ENCODE measurements at regions of chr11 and their contacts with region 1.

Region 1: DNA sequence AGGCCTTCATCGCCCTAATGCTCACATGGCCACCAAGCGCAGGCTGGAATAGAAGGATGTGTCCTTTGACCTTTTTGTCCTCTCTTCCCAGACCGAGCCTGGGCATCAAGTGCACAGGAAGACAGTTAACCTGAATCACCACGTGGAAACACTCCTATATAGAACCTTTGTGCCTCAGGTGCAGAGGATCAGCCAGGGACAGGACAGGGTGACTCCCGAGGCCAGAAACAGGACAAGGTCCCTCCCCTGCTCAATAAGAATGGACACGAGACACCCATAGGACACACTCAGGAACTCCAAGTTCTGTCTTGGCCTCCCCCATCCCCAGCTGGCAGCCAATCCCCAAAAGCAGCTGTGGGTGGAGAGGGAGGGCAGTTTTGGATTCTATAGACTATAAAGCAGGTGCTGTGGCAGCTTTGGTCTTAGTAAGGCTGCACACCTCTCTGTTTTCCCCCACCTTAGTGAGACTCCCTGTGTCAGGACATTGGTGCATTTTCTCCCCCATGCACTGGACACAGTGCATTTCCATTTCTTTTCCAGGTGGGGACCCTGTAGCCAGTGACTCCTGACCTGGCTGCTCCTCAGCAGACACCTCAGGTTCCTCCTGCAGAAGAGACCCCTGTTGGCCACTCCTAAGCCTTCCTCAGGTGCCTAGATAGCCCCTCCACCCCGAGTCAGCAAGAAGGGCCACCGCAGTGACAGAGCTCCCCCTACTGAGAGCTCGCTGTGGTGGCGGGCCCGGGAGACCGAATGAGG is 43.6 kb upstream of the POU2AF1 start:
- DNase-seq: peak; percentile 92
- H3K4me3 ChIP-seq: no peak overlapping the region
- H3K27ac ChIP-seq: peak overlapping the region; percentile 67
- H3K4me1 ChIP-seq: peaks cover 62% of the 10 kb centered on the region
- CTCF ChIP-seq: peak; percentile 99

Region 2: GRCh38 chr11:111177037-111177871 is 245.4 kb before region 1 on chr11:
- CTCF ChIA-PET with region 1: no interaction called
- POLR2A ChIA-PET with region 1: interaction called, 6 read pairs
- intact Hi-C with region 1: loop called (anchors 5 kb)
- DNase-seq: peak; percentile 91
- H3K4me3 ChIP-seq: peak overlapping the region; percentile 53
- H3K27ac ChIP-seq: peak overlapping the region; percentile 98
- H3K4me1 ChIP-seq: peaks cover 66% of the 10 kb centered on the region
- CTCF ChIP-seq: no peak

Region 3: GRCh38 chr11:111272420-111272819 is 150.3 kb before region 1 on chr11:
- CTCF ChIA-PET with region 1: interaction called, 3 read pairs
- POLR2A ChIA-PET with region 1: interaction called, 11 read pairs
- intact Hi-C with region 1: no loop called
- DNase-seq: peak; percentile 71
- H3K4me3 ChIP-seq: peak overlapping the region; percentile 41
- H3K27ac ChIP-seq: peak overlapping the region; percentile 90
- H3K4me1 ChIP-seq: peaks cover 66% of the 10 kb centered on the region
- CTCF ChIP-seq: no peak

Region 4: DNA sequence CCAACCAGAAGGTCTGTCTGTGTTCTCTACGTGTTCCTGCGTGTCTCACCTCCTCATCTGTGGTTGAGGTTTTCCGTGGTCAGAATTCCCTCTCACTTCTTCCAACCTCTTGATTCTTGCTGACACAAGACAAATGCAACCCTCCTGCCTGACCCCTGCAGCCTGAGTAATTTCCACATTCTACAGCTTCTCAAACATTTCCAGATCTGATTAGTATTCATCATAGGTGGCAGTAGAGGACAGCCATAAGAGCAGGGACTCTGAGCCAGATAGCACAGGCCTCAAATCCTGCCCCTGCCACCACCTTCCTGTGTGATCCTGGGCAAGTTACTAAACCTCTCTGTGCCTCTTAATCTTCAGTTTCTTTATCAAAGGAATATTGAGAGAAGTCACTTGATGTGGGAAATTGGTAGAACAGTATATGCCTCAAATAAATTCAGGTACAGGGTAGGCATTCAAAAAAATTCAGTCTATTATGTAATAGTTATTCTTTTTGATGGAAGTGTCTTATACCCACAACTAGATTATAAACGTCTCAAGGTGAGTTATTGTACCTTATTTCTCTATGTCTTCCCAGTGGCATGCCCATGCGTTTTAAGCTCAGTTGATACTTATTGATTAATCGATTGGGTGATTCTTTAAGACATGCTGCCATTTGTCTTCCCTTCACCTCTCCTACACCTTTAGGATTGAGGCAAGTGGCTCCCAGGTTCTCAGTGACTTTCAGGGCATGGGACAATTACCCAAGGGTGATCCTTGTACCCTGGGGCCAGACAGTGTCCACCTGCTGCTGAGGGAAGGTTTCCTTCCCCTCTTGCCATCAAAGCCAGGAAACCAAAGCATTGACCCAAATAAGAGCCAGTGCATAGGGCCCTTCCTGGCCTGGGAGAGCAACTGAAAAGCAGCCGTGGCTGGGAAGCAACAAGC is 63.2 kb before region 1 on chr11:
- CTCF ChIA-PET with region 1: interaction called, 7 read pairs
- POLR2A ChIA-PET with region 1: interaction called, 577 read pairs
- intact Hi-C with region 1: loop called (anchors 1 kb)
- DNase-seq: peak; percentile 59
- H3K4me3 ChIP-seq: no peak overlapping the region
- H3K27ac ChIP-seq: peak overlapping the region; percentile 40
- H3K4me1 ChIP-seq: peaks cover 58% of the 10 kb centered on the region
- CTCF ChIP-seq: peak; percentile 70

Region 5: DNA sequence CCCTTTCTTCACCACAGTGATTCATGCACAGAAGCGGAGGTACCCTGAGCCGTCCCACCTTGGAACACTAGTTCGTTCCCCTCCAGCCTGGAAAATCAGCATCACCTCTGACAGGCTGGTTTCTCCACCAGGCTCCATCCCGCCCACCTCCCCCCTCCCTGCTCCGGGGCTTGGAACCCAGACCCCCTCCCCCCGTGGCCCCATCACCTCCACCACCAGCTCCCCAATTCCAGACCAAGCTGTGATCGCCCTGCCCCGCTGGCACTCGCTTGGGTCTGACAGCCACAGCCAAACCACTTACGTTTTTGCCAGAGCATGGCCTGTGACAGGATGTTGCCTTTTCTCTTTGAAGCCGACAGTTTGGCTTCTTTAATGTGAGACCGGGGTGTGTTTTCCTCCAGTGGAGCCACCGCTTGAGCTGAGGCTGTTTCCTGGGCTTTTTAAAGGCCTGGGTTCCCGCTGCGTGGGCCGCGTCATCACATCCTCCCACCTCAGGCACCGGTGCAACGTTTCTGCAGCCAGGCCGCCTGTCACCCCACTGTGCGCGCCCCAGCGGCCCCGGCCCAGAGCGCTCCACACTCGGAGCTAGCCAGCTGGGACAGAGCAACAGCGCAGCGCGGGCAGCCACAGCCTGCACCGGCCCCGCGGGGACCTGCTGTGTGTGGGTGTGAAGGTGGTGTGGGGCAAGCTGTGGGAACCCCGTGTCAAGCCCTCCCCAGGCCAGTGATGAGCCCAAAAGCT is 43.6 kb before region 1 on chr11 and contains the start of gene POU2AF1:
- CTCF ChIA-PET with region 1: interaction called, 8 read pairs
- POLR2A ChIA-PET with region 1: interaction called, 577 read pairs
- intact Hi-C with region 1: loop called (anchors 1 kb)
- DNase-seq: peak; percentile 95
- H3K4me3 ChIP-seq: peak within 1 kb of the TSS; percentile 92
- H3K27ac ChIP-seq: peak within 1 kb of the TSS; percentile 96
- H3K4me1 ChIP-seq: peaks cover 74% of the 10 kb centered on the region
- CTCF ChIP-seq: no peak
- total RNA-seq, gene POU2AF1: 56.4 and 86.1 TPM in 2 replicates

Region 6: DNA sequence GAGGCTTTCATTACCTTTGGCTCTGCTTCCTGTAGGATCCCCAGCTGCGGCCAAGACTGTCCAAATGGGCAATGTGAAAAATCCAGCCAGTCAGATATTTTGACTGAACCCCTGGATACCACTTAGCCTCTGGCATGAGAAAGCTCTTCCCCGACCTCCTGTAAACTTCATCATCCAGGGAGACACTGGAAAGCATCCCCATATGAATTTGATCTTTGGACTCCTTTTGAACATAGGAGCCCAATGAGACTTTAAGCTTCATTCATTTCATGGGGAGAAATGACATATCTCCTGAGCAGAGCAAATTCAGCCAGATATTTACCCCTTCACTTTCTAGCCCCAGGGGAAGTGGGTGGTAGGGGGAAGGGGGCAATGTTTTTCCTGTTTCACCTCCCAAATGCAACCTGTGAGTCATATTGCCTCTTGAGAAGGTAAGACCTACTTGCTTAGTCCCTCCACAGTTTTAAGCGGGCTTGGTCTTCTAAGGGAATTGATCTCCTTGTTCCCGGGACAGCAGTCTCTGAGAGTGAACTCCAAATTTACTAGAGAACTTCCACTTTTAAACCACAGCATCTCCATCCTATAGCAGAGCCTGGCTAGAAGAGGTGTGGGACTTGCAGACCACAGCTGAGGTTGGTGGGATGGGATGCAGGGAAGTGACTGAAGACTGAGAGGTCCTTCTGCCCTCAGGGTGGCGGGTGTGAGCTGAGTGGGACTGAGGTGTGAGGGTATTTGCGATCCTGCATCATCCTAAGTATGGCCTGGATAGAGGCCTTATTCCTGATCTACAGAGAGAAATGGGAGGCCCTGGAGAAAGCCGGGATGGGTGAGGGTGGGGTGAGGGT is 23.3 kb before region 1 on chr11:
- CTCF ChIA-PET with region 1: interaction called, 35 read pairs
- POLR2A ChIA-PET with region 1: interaction called, 236 read pairs
- intact Hi-C with region 1: loop called (anchors 1 kb)
- DNase-seq: peak; percentile 72
- H3K4me3 ChIP-seq: peak overlapping the region; percentile 47
- H3K27ac ChIP-seq: peak overlapping the region; percentile 90
- H3K4me1 ChIP-seq: peaks cover 73% of the 10 kb centered on the region
- CTCF ChIP-seq: peak; percentile 79

Region 7: DNA sequence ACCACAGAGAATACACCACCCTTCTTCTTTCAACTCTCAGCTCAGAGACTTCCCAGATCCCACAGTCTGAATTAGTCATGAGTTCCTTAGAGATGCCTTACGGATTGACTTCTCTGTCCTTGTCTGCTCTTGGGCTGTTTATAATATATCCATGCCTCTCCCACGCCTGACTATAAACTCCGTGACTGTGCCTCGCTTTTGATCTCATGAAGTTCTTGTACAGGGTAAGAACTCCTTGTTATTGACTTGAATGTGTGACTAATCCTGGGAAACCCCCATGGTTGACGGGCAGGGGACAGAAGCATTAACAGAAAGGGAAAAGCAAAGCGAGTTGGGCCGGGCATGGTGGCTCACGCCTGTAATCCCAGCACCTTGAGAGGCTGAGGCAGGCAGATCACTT is 18.8 kb after region 1 on chr11:
- CTCF ChIA-PET with region 1: interaction called, 22 read pairs
- POLR2A ChIA-PET with region 1: interaction called, 39 read pairs
- intact Hi-C with region 1: loop called (anchors 1 kb)
- DNase-seq: no peak
- H3K4me3 ChIP-seq: no peak overlapping the region
- H3K27ac ChIP-seq: no peak overlapping the region
- H3K4me1 ChIP-seq: peaks cover 79% of the 10 kb centered on the region
- CTCF ChIP-seq: no peak